ENCODE measurements at regions of chr3 and their contacts with region 1.

Region 1: GRCh38 chr3:128804017-128804810 is 75.2 kb upstream of the ACAD9 start:
- DNase-seq: peak; percentile 86
- H3K4me3 Mint-ChIP-seq: peak overlapping the region; percentile 45
- H3K27ac Mint-ChIP-seq: peak overlapping the region; percentile 96
- H3K4me1 Mint-ChIP-seq: peaks cover 87% of the 10 kb centered on the region
- H3K27me3 Mint-ChIP-seq: no peaks in the 10 kb centered on the region

Region 2: DNA sequence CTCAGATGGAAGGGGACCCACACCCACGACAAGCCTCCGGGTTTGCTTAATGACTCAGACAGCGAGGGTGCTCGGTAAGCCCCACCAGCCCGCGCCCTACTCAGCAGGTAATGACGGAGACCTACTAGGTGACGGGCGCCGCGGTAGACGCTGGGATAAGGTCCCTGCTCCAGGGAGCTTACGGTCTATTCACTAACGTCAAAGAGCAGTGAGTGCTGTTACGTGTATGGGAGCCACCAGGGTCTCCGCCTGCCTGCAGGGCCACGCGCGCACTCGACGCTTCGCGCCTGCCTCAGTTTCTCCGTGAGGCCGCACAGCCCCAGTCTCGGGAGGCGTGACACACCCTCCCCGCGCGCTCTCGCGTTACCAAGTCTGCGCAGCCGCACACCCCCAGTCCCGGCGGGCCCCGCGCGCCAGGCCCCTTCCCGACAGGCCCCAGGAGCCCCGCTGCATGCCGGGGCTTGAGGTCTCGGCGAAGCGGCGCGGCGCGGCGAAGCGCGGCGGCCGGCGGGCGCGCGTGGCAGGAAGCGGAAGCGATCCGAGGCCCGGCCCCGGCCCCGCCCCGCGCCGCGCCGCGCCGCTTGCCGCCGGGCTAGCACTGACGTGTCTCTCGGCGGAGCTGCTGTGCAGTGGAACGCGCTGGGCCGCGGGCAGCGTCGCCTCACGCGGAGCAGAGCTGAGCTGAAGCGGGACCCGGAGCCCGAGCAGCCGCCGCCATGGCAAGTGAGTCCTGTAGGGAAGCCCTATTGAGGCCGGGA is 752.2 kb before region 1 on chr3 and contains the start of gene SEC61A1:
- CTCF ChIA-PET with region 1: no interaction called
- intact Hi-C with region 1: loop called (anchors 10 kb)
- DNase-seq: peak; percentile 95
- H3K4me3 Mint-ChIP-seq: peak within 1 kb of the TSS; percentile 91
- H3K27ac Mint-ChIP-seq: peak within 1 kb of the TSS; percentile 95
- H3K4me1 Mint-ChIP-seq: peaks cover 40% of the 10 kb centered on the region
- H3K27me3 Mint-ChIP-seq: peaks cover under 1% of the 10 kb centered on the region
- total RNA-seq, gene SEC61A1: 115 to 119 TPM

Region 3: GRCh38 chr3:128650096-128651050 is 153.8 kb before region 1 on chr3 and contains the start of gene RPN1:
- CTCF ChIA-PET with region 1: no interaction called
- intact Hi-C with region 1: loop called (anchors 1 kb)
- DNase-seq: peak; percentile 97
- H3K4me3 Mint-ChIP-seq: peak within 1 kb of the TSS; percentile 83
- H3K27ac Mint-ChIP-seq: peak within 1 kb of the TSS; percentile 88
- H3K4me1 Mint-ChIP-seq: peaks cover 30% of the 10 kb centered on the region
- H3K27me3 Mint-ChIP-seq: no peaks in the 10 kb centered on the region
- total RNA-seq, gene RPN1: 124 to 129 TPM

Region 4: DNA sequence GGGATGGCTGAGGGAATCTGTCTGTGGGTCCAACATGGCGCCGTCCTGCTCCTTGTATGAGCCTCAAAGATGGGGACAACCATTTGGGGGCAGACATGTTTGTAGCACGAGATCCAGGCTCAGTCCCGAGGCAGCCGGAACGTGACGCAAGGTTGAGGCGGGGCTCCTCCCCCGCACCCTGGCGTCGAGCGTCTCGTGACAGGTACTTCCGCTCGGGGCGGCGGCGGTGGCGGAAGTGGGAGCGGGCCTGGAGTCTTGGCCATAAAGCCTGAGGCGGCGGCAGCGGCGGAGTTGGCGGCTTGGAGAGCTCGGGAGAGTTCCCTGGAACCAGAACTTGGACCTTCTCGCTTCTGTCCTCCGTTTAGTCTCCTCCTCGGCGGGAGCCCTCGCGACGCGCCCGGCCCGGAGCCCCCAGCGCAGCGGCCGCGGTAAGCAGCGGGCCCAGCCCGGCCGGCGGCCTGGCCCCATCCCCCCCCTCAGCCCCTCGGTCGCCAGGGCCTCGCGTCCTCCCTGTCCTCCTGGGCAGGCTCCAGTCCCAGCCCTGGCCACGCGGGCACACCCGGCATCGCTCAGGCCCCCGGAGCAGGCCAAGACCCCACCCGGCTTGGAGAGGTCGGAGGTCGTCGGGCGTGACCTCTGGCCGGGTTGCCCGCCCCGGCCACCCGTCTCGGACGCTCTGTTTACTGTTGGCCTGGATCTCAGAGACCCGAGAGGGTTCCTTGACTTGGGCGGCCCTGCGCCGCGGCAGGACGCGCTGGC is 78.1 kb before region 1 on chr3 and contains the start of gene RAB7A:
- CTCF ChIA-PET with region 1: no interaction called
- intact Hi-C with region 1: loop called (anchors 1 kb)
- DNase-seq: peak; percentile 99
- H3K4me3 Mint-ChIP-seq: peak within 1 kb of the TSS; percentile 81
- H3K27ac Mint-ChIP-seq: peak within 1 kb of the TSS; percentile 89
- H3K4me1 Mint-ChIP-seq: peaks cover 53% of the 10 kb centered on the region
- H3K27me3 Mint-ChIP-seq: no peaks in the 10 kb centered on the region
- total RNA-seq, gene RAB7A: 222 to 228 TPM

Region 5: DNA sequence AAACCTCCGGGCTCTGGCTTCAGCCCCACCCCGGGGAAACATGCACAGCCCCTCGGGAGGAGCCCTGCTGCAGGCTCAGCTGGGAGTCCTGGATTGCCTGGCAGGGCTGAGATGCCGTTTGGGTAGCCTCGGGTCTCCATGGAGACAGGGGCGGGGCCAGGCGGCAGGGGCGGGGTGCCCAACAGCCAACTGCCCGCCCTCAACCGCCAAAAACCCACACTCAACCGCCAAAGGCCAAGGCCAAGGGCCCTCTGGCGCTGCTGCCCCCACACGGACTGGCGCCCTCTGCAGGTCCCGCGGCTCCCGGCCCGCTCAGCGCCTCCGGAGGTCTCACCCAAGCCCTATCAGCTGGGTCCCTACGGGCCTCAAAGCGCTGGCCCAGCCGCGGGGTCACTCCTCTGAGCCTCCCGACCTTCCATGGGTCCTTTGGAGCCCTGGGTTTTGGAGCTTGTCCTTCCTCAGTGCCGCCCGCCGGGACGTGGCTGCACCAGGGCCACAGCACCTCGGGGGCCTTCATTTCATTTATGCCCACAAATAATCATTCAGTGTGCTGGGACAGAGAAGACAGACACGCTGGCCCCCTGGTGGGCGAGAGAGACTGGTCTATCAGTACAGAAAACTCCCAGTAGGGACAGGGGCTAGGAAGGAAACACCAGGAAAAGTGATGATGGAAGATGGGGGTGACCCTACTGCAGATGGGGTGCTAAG is 41.7 kb after region 1 on chr3:
- CTCF ChIA-PET with region 1: interaction called, 3 read pairs
- intact Hi-C with region 1: loop called (anchors 1 kb)
- DNase-seq: peak; percentile 89
- H3K4me3 Mint-ChIP-seq: peak overlapping the region; percentile 69
- H3K27ac Mint-ChIP-seq: peak overlapping the region; percentile 79
- H3K4me1 Mint-ChIP-seq: peaks cover 17% of the 10 kb centered on the region
- H3K27me3 Mint-ChIP-seq: no peaks in the 10 kb centered on the region

Region 6: DNA sequence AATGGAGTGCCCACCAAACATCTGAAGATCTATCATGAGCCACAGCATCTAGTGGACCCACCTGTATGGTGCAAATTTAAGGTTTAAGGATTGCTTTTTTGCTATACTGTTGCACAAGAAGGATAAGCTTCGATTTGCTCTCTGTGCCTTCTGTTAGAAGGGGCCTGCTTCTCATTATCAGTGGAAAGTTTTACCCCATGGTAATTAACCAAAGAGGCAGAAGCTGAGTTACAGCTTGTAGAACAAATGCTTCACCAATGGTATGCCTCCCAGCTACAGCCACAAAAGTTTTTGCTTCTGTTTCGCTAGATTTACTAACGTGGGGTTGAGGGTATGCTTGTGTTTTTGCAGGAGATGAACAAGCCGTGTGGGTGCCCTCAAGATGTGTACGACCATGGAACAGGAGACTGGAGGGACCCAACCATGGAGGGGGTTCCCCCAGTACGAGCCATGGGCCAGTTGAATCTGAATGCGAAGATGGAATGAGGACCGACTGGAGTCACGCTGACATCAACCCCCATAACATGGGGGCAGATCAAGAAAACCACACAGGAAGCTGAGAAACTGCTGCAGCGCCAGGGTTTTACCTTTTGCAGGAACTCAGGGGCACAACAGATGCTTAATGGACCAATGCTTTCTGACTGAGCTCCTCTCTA is 118.7 kb after region 1 on chr3:
- CTCF ChIA-PET with region 1: no interaction called
- intact Hi-C with region 1: loop called (anchors 1 kb)
- DNase-seq: peak; percentile 80
- H3K4me3 Mint-ChIP-seq: peak overlapping the region; percentile 73
- H3K27ac Mint-ChIP-seq: peak overlapping the region; percentile 80
- H3K4me1 Mint-ChIP-seq: peaks cover 48% of the 10 kb centered on the region
- H3K27me3 Mint-ChIP-seq: no peaks in the 10 kb centered on the region

Region 7: GRCh38 chr3:129183569-129184395 is 379.6 kb after region 1 on chr3 and contains the start of gene CNBP:
- CTCF ChIA-PET with region 1: no interaction called
- intact Hi-C with region 1: loop called (anchors 5 kb)
- DNase-seq: peak; percentile 93
- H3K4me3 Mint-ChIP-seq: peak within 1 kb of the TSS; percentile 96
- H3K27ac Mint-ChIP-seq: peak within 1 kb of the TSS; percentile 95
- H3K4me1 Mint-ChIP-seq: peaks cover 35% of the 10 kb centered on the region
- H3K27me3 Mint-ChIP-seq: no peaks in the 10 kb centered on the region
- total RNA-seq, gene CNBP: 490 to 500 TPM

Measured in activated naive CD4-positive, alpha-beta T cell treated with anti-CD3 and anti-CD28 coated beads for 36 hours (primary cell).